PC-3 (cell line): ENCODE measurements at regions of chr1 and their contacts with region 1.

Region 1: GRCh38 chr1:174097426-174097825 is 61.9 kb upstream of the RABGAP1L start:
- DNase-seq: no peak
- ATAC-seq: no peak
- H3K4me3 ChIP-seq: no peak overlapping the region
- H3K27ac ChIP-seq: no peak overlapping the region
- H3K4me1 ChIP-seq: no peaks in the 10 kb centered on the region
- H3K27me3 ChIP-seq: no peaks in the 10 kb centered on the region
- CTCF ChIP-seq: no peak

Region 2: DNA sequence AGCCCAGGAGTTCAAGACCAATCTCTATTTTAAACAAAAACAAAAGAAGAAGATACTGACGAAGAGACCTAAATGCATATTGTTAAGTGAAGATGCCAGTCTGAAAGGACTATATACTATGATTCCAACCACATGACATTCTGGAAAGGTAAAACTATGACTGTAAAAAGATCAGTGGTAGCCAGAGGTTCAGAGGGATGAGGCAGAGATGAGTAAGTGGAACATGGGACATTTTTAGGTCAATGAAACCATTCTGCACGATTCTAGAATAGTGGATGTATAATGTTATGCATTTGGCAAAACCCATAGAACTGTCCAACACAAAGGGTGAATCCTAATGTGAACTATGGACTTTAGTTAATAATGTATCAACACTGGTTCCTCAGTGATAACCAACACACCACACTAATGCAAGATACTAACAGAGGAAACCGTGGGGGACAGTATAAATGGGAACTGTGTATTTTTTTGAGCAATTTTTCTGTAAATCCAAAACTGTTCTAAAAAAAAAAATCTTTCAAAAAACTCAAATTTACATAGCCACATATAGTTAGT is 83.5 kb before region 1 on chr1:
- CTCF ChIA-PET with region 1: no interaction called
- POLR2A ChIA-PET with region 1: no interaction called
- intact Hi-C with region 1: no loop called
- DNase-seq: no peak
- ATAC-seq: no peak
- H3K4me3 ChIP-seq: no peak overlapping the region
- H3K27ac ChIP-seq: no peak overlapping the region
- H3K4me1 ChIP-seq: no peaks in the 10 kb centered on the region
- H3K27me3 ChIP-seq: no peaks in the 10 kb centered on the region
- CTCF ChIP-seq: no peak

Region 3: GRCh38 chr1:174114788-174115448 is 17.5 kb after region 1 on chr1:
- CTCF ChIA-PET with region 1: no interaction called
- POLR2A ChIA-PET with region 1: no interaction called
- intact Hi-C with region 1: no loop called
- DNase-seq: peak; percentile 68
- ATAC-seq: peak; percentile 81
- H3K4me3 ChIP-seq: no peak overlapping the region
- H3K27ac ChIP-seq: no peak overlapping the region
- H3K4me1 ChIP-seq: no peaks in the 10 kb centered on the region
- H3K27me3 ChIP-seq: no peaks in the 10 kb centered on the region
- CTCF ChIP-seq: peak; percentile 65

Region 4: DNA sequence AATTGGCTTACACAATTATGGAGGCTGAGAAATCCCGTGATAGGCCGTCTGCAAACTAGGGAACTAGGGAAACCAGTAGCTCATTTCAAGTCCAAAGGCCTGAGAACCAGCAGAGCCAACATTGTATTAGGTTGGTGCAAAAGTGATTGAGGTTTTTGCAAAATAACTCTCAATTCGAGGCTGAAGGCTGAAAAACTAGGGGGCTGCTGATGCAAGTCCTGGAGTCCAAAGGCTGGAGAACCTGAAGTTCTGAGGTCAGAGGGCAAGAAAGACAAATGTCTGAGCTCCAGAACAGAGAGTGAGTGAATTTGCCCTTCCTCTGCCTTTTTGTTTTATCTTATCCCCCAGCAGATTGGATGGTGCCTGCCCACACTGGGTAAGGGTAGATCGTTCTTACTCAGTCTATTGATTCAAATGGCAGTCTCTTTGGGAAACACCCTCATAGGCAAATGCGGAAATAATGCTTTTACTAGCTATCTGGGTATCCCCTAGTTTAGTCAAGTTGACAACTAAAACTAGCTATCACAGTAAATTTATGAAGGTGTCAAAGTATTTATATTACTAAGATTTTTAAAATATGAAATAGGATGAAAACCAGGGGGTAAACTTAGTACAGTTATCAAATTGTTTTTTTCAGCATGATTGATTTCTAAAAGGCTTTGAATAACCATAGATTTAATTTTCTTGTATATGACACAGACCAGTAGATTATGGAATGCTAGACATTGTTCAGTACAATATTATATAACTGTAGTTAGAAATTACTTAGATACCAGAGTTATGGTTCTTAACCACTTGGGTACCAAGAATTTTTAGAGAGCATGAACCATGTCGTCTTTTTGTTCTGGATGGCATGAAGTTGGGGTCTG is 77.3 kb after region 1 on chr1:
- CTCF ChIA-PET with region 1: no interaction called
- POLR2A ChIA-PET with region 1: no interaction called
- intact Hi-C with region 1: no loop called
- DNase-seq: no peak
- ATAC-seq: no peak
- H3K4me3 ChIP-seq: no peak overlapping the region
- H3K27ac ChIP-seq: no peak overlapping the region
- H3K4me1 ChIP-seq: no peaks in the 10 kb centered on the region
- H3K27me3 ChIP-seq: no peaks in the 10 kb centered on the region
- CTCF ChIP-seq: no peak

Region 5: DNA sequence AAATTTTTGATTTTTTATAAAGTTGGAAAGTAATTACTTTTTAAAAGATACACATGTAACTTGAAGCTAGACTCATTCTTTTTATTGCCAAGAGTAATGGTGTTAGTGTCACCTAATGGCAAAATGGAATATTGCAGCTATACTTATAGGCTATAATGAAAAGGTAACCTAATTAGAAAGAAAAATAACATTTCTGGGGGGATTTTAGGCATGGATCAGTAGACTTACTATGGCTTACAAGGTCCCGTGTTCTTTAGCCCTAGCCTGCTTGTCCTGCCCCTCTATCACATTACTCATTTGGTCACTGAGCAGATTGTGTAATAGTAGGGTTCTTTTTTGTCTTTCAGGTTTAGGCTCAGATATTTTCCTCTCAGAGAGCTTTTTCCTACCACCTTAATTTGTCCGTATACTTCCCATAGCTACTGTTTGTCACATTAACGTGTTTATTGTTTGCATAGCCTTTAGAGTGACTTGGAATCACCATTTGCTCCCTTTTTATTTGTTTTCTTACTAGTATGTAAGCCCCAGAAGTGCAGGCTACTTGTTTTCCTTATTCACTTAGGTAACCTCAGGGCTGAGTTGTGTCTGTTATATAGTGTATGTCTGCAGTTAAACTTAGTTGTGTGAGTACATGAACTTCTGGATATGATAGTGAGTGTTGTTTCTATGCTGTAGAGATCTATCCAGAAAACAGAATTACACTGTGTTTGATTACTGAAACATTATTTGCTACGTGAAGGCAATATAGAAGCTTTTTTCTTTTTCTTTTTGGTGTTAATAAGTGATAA is 120.6 kb after region 1 on chr1:
- CTCF ChIA-PET with region 1: no interaction called
- POLR2A ChIA-PET with region 1: no interaction called
- intact Hi-C with region 1: loop called (anchors 1 kb)
- DNase-seq: peak; percentile 52
- ATAC-seq: peak; percentile 46
- H3K4me3 ChIP-seq: no peak overlapping the region
- H3K27ac ChIP-seq: no peak overlapping the region
- H3K4me1 ChIP-seq: no peaks in the 10 kb centered on the region; the same call in 1 of the 2 replicates
- H3K27me3 ChIP-seq: no peaks in the 10 kb centered on the region
- CTCF ChIP-seq: peak; percentile 75